ENCODE measurements at regions of chr20 and their contacts with region 1.

Region 1: DNA sequence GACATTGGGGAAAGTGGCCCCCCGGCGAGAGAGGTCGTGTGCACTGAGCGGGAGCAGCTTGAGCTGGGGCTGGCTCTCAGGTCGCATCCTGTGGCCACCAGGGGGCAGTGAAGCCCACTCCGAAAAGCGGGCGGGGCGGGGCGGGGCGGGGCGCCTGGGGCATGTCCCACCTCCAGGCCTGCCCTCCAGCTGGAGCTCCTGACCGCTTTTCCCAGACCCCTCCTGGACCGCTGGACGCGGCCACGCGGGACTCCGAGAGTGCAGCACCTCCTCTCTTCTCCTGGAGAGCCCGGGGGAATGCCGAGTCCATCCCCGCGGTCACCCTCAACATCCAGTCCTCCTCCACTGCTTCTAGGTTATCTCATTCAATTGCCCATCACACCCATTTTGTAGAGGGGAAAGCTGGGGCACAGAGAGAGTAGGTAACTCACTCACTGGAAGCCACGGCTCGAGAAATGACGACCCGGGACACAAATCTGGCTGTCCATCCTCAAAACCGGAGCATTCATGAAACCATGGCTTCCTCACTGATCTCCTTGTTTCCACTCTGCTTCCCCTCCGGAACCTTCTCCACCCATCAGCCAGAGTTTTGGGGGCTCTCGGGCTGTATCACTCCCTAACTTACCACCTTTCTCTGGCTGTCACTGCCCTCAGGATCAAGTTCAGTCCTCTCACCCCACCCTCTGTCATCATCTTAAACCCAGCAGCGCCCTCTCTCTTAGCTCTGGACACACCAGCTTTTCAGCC is 24.1 kb downstream of the COX4I2 start:
- DNase-seq: peak; percentile 75
- H3K4me3 ChIP-seq: no peak overlapping the region
- H3K27ac ChIP-seq: peak overlapping the region; percentile 18
- H3K4me1 ChIP-seq: peaks cover 8% of the 10 kb centered on the region
- H3K27me3 ChIP-seq: no peaks in the 10 kb centered on the region
- CTCF ChIP-seq: peak; percentile 57 to 86
- POLR2A ChIP-seq: peak; percentile 80

Region 2: GRCh38 chr20:31508517-31509244 is 153.1 kb before region 1 on chr20:
- CTCF ChIA-PET with region 1: no interaction called
- POLR2A ChIA-PET with region 1: no interaction called
- dilution Hi-C with region 1: no loop called
- intact Hi-C with region 1: no loop called
- DNase-seq: no peak
- H3K4me3 ChIP-seq: no peak overlapping the region
- H3K27ac ChIP-seq: no peak overlapping the region
- H3K4me1 ChIP-seq: no peaks in the 10 kb centered on the region
- H3K27me3 ChIP-seq: no peaks in the 10 kb centered on the region
- CTCF ChIP-seq: no peak
- POLR2A ChIP-seq: no peak

Region 3: GRCh38 chr20:31560094-31560899 is 101.5 kb before region 1 on chr20:
- CTCF ChIA-PET with region 1: interaction called, 16 read pairs
- POLR2A ChIA-PET with region 1: no interaction called
- dilution Hi-C with region 1: no loop called
- intact Hi-C with region 1: no loop called
- DNase-seq: peak; percentile 79
- H3K4me3 ChIP-seq: no peak overlapping the region
- H3K27ac ChIP-seq: peak overlapping the region; percentile 100
- H3K4me1 ChIP-seq: peaks cover 35% of the 10 kb centered on the region
- H3K27me3 ChIP-seq: no peaks in the 10 kb centered on the region
- CTCF ChIP-seq: peak; percentile 90 to 97
- POLR2A ChIP-seq: peak; percentile 41

Region 4: GRCh38 chr20:31644701-31645100 is 17.1 kb before region 1 on chr20:
- CTCF ChIA-PET with region 1: interaction called, 17 read pairs
- POLR2A ChIA-PET with region 1: no interaction called
- dilution Hi-C with region 1: no loop called
- intact Hi-C with region 1: no loop called
- DNase-seq: no peak
- H3K4me3 ChIP-seq: no peak overlapping the region
- H3K27ac ChIP-seq: no peak overlapping the region
- H3K4me1 ChIP-seq: no peaks in the 10 kb centered on the region
- H3K27me3 ChIP-seq: peaks cover 0 to 7% of the 10 kb centered on the region in 2 experiments
- CTCF ChIP-seq: no peak
- POLR2A ChIP-seq: no peak

Region 5: GRCh38 chr20:31684153-31685015 is 22.6 kb after region 1 on chr20:
- CTCF ChIA-PET with region 1: interaction called, 13 read pairs
- POLR2A ChIA-PET with region 1: interaction called, 6 read pairs
- dilution Hi-C with region 1: no loop called
- intact Hi-C with region 1: no loop called
- DNase-seq: no peak
- H3K4me3 ChIP-seq: no peak overlapping the region
- H3K27ac ChIP-seq: no peak overlapping the region
- H3K4me1 ChIP-seq: peaks cover 14% of the 10 kb centered on the region
- H3K27me3 ChIP-seq: no peaks in the 10 kb centered on the region
- CTCF ChIP-seq: no peak
- POLR2A ChIP-seq: no peak

Region 6: DNA sequence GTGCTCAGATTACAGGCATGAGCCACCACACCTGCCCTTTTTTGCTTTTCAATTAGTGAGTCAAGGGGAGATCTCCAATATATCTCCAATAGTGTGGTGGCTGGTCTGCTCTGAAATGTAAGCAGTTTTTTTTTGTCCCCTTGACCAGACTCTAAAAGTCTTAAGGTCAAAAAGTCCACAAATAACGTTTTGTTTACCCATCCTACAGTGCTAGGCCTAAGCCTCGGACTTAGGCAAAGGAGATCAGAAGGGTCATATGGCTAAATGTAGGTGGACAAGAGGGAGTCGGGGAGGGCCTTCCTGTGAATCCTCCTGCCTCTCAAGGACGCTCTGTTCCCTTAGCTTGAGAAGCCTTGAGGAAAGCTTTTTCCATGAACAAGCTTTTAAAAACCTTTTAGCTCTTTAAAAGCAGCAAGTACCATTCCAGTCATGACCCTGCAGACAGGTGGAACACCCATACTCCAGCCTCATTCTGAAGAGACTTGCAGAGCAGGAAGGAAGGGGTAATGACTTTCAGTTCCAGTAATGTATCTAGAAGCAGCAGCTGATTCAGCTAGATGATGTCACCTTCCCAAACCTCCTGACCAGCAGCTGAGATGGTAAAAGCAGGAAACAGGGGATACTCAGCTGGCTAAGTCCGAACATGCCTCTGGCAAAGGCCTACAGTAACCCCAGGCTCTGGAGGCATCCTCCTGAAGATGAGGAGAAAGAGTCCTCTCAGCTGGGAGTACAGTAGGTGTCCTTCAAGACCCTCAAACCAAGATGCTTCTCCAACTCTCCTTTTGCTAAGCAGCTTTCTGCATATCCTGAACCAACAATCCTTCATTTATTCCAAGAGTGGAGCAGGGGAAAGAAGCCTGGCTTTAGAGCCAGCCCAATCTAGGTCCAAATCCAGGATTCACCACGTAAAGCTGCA is 37.3 kb after region 1 on chr20:
- CTCF ChIA-PET with region 1: interaction called, 24 read pairs
- POLR2A ChIA-PET with region 1: interaction called, 8 read pairs
- dilution Hi-C with region 1: no loop called
- intact Hi-C with region 1: loop called (anchors 1 kb)
- DNase-seq: peak; percentile 96
- H3K4me3 ChIP-seq: no peak overlapping the region
- H3K27ac ChIP-seq: peak overlapping the region; percentile 86
- H3K4me1 ChIP-seq: peaks cover 52% of the 10 kb centered on the region
- H3K27me3 ChIP-seq: no peaks in the 10 kb centered on the region
- CTCF ChIP-seq: no peak
- POLR2A ChIP-seq: peak; percentile 42

Region 7: DNA sequence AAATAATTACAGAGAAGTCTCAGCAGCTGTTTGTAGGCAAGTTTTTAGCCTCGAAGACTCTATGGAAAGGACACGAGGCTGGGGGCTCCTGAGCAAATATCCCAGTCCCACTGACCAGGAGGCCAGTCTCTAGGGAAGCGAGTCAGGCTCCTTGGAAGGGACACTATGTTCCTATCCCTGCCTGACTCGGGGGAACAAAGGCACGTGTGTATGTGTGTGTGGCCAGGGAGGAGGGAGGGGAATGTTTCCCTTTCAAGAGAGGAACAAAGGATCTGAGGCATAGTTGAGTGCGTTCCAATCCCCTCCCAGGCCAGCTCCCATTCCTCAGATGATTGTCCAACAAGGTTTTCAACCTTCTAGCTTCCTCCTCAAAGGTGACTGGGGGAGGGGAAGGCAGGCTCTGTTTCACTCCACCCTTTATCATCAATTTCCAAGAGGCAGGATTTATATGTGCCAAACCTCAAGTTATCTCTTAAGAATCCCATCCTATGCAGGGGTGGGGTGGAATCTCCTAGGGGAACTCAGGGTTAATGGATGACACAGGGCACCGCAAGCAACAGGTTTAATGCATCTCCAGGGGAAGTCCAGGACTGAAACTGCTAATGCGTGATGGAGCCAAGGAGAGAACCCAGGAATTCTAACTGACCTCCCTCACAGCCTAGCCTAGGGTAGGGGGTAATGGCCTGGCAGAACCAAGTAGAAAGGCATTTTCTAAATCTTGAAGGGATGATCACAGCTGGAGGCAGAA is 50.9 kb after region 1 on chr20:
- CTCF ChIA-PET with region 1: interaction called, 658 read pairs
- POLR2A ChIA-PET with region 1: no interaction called
- dilution Hi-C with region 1: no loop called
- intact Hi-C with region 1: loop called (anchors 2 kb)
- DNase-seq: peak; percentile 91
- H3K4me3 ChIP-seq: peak overlapping the region in 1 of 3 experiments; percentile 26
- H3K27ac ChIP-seq: peak overlapping the region; percentile 97
- H3K4me1 ChIP-seq: peaks cover 55% of the 10 kb centered on the region
- H3K27me3 ChIP-seq: no peaks in the 10 kb centered on the region
- CTCF ChIP-seq: no peak
- POLR2A ChIP-seq: no peak

Region 8: DNA sequence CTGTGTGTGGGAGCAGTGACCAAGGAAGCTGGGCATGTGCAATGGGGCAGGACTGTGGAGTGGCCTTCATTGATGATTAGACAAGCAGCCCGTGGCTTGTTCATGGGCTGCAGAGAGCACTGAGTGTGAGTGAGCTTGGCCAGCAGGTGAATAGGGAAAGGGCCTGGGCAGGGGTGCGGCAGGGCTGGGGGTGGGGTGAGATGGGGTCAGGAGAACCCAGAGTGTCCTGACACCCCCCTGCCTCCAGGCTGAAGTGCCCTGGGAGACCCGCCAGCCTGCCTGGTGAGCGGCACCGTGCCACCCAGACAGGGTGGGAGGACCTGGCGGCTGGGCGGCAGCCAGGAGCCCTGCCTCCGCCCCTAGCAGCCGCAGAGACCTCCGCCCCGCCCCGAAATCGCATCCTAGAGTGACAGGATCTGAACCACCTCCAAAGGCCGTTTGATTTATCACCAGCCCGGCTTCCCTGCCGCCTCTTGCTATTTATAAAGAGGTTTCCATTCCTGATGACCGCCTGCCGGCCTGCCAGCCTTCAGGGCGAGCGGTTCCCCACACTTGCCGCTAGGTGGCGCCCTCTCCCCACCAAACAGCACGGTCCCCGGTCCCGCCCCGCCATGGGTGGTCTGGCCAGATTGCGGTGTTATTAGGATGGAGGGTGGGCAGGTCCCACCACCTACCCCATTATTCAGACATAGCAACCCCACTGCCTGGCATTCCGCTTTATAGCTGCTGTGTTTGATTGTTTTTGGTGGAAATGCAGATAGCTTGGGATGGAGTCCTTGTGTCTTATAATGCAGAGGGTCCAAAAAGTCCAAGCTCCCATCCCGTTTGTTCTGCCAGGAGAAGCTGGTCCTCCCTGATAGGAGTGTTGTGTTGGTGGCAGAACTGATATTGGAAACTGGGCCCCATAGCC is 160.9 kb after region 1 on chr20:
- CTCF ChIA-PET with region 1: no interaction called
- POLR2A ChIA-PET with region 1: no interaction called
- dilution Hi-C with region 1: no loop called
- intact Hi-C with region 1: no loop called
- DNase-seq: peak; percentile 62
- H3K4me3 ChIP-seq: no peak overlapping the region
- H3K27ac ChIP-seq: peak overlapping the region; percentile 26
- H3K4me1 ChIP-seq: peaks cover 22% of the 10 kb centered on the region
- H3K27me3 ChIP-seq: no peaks in the 10 kb centered on the region
- CTCF ChIP-seq: peak; percentile 96 to 97
- POLR2A ChIP-seq: no peak